ENCODE measurements at regions of chr16 and their contacts with region 1.

Region 1: DNA sequence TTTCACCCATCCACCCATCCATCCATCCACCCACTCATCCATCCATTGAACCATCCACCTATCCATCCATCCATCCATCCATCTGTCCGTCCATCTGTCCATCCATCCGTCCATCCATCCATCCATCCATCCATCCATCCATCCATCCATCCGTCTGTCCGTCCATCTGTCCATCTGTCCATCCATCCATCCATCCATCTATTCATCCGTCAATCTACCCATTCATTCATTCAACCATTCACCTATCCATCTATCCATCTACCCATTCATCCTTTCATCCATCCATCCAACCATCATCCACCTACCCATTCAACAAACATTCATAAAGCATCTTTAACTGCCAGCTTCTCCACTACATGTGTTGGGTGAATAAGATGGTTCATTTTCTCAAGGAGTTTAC is 28.9 kb downstream of the GP2 start:
- DNase-seq: no peak

Region 2: DNA sequence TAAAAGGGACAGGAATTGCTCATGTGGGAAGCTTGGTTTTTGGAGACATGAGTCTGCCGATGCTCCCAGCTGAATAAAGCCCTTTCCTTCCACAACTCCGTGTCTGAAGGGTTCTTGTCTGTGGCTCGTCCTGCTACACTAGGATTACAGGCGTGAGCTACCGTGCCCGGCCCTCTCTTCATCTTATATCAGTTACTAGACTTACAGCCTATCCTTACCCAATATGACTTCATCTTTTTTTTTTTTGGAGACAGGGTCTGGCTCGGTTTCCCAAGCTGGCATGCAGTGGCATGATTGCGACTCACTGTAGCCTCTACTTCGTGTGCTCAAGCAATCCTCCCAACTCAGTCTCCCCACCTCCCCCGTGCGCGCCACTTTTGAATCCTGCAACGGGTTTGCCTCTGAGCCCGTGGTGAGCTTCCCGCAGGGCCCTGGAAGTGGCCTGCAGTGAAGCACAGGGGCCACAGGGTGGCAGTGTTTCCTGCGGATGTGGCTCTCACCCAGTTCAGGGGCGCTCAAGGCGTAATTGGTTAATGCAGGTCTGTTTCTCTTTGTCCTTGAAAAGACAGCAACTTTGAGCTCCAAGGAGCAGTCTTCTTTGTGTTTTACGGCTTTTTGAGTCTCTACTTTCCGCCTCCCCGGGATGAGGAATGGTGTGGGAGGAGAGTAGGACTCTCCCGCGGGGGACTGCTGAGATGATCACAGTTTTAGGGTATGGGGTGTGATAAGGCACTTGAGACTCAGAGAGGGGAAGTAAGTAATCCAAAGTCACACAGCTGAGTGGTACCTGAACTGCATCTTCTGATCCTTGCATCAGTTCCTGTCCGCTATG is 391.1 kb before region 1 on chr16:
- intact Hi-C with region 1: loop called (anchors 5 kb)
- DNase-seq: peak; percentile 51 to 95 (median 68)